IMR-90 (cell line): ENCODE measurements at regions of chr4 and their contacts with region 1.

Region 1: GRCh38 chr4:82758701-82759685 is 39.6 kb downstream of the SCD5 start:
- DNase-seq: no peak
- ATAC-seq: no peak
- H3K4me3 ChIP-seq: no peak overlapping the region
- H3K27ac ChIP-seq: no peak overlapping the region
- H3K4me1 ChIP-seq: peaks cover under 1% of the 10 kb centered on the region
- H3K27me3 ChIP-seq: no peaks in the 10 kb centered on the region; the same call in 1 of the 2 replicates
- CTCF ChIP-seq: no peak
- POLR2A ChIP-seq: no peak
- RAD21 ChIP-seq: no peak

Region 2: GRCh38 chr4:82733636-82734035 is 25.4 kb before region 1 on chr4:
- CTCF ChIA-PET with region 1: no interaction called
- POLR2A ChIA-PET with region 1: interaction called, 11 read pairs
- dilution Hi-C with region 1: no loop called
- in situ Hi-C with region 1: no loop called
- intact Hi-C with region 1: no loop called
- DNase-seq: peak; percentile 93
- ATAC-seq: peak; percentile 75
- H3K4me3 ChIP-seq: no peak overlapping the region
- H3K27ac ChIP-seq: no peak overlapping the region
- H3K4me1 ChIP-seq: peaks cover 8% of the 10 kb centered on the region
- H3K27me3 ChIP-seq: no peaks in the 10 kb centered on the region
- CTCF ChIP-seq: no peak
- POLR2A ChIP-seq: no peak
- RAD21 ChIP-seq: no peak

Region 3: DNA sequence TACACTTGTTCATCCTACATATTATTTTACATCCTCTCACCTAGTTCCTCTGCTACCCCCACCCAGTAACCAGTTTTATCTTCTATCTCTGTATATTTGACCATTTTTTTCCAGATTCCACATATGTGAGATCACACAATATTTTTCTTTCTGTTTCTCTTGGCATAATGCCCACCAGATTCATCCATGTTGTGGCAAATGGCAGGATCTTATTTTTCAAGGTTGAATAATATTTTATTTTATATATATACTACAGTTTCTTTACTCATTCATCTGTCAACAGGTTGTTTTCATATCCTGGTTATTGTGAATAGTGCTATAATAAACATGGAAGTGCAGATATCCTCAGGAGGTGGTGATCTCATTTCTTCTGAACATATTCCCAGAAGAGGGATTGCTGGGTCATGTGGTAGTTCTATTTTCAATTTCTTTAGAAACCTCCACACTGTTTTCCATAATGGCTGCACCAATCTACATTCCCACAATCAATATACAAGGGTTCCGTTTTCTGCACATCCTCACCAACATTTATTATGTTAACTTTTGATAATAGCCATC is 189.7 kb after region 1 on chr4:
- CTCF ChIA-PET with region 1: no interaction called
- POLR2A ChIA-PET with region 1: no interaction called
- dilution Hi-C with region 1: no loop called
- in situ Hi-C with region 1: no loop called
- intact Hi-C with region 1: no loop called
- DNase-seq: peak; percentile 52
- ATAC-seq: peak; percentile 57
- H3K4me3 ChIP-seq: no peak overlapping the region
- H3K27ac ChIP-seq: no peak overlapping the region
- H3K4me1 ChIP-seq: no peaks in the 10 kb centered on the region
- H3K27me3 ChIP-seq: no peaks in the 10 kb centered on the region
- CTCF ChIP-seq: no peak
- POLR2A ChIP-seq: no peak
- RAD21 ChIP-seq: no peak